ENCODE measurements at regions of chr17 and their contacts with region 1.

Region 1: GRCh38 chr17:48307814-48308411 is 122.1 kb downstream of the SKAP1 start:
- H3K4me3 ChIP-seq: no peak overlapping the region
- H3K27ac ChIP-seq: no peak overlapping the region
- H3K4me1 ChIP-seq: peaks cover 6% of the 10 kb centered on the region
- CTCF ChIP-seq: peak; percentile 47; the same call in 1 of the 2 replicates

Region 2: DNA sequence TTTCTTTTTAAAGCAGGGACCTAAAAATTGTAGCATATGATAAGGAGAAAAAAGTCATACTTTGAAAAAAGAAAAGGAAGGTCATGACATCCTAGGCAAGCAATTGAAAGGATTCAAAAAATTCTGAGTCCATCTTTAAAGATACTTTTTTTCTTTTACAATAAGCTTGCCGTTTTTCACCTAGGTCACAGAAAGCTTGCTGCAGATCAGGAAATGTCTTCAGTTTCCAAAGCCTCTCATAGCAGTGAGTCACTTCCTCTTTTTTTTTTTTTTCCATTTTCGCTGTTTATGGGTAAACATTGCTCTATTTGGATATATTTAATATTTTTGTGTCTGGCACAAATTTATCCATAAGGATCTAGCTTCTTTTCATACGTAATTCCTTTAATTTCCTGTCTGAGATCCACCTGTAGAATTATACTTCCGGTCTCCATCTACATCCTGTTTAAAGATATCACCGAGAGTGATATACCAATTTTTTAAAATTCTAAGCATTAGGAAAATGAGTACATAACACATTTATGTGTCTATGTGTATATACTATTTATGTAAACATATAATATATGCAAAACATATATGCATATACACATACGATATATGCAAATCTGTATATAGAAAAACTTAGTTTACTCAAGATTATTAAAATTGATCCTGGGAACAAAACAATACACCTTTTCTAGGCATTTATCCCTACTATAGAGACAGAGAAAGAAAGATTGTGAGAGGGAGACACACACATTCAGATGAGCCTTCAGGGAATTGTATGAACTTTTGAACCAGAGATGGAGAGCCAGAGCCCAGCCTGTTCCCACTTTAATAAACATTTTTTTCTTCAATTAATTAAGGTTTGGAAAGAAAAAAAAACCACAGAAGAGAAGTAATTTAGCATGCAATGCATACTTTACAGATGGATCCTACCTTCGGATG is 12.3 kb before region 1 on chr17:
- CTCF ChIA-PET with region 1: interaction called, 41 read pairs
- POLR2A ChIA-PET with region 1: no interaction called
- H3K4me3 ChIP-seq: no peak overlapping the region
- H3K27ac ChIP-seq: no peak overlapping the region
- H3K4me1 ChIP-seq: peaks cover 3% of the 10 kb centered on the region; the same call in 1 of the 2 replicates
- CTCF ChIP-seq: no peak

Region 3: DNA sequence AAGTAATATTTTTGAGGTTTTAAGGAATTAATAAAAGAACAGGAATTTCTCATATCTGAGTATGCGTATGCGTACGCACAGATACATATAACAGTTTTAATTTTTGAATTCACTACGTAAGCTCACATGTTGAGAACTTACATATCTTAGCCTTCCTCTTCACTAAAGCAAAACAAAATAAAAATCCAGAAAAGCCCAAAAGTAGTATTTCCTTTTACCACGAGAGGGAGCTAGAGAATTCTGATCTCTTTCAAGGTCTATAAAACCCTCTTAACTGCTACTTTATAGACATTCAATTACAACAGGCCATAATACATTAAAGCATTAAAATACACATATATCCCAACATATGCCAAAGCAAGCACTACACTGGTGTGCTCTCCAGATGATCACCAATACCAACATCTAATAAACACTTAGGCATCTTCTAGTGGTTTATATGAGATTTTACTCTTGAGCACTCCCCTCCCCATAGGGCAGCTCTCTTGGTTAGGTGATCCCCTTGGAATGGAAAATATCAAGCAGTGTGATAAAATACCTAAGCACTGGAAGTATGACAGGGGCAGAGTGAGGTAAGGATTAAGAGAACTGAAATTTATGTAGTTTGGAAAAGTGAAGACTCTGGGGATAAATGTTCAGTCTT is 28.1 kb after region 1 on chr17:
- CTCF ChIA-PET with region 1: interaction called, 60 read pairs
- POLR2A ChIA-PET with region 1: no interaction called
- H3K4me3 ChIP-seq: no peak overlapping the region
- H3K27ac ChIP-seq: no peak overlapping the region
- H3K4me1 ChIP-seq: peaks cover 15% of the 10 kb centered on the region; the same call in 1 of the 2 replicates
- CTCF ChIP-seq: no peak

Region 4: DNA sequence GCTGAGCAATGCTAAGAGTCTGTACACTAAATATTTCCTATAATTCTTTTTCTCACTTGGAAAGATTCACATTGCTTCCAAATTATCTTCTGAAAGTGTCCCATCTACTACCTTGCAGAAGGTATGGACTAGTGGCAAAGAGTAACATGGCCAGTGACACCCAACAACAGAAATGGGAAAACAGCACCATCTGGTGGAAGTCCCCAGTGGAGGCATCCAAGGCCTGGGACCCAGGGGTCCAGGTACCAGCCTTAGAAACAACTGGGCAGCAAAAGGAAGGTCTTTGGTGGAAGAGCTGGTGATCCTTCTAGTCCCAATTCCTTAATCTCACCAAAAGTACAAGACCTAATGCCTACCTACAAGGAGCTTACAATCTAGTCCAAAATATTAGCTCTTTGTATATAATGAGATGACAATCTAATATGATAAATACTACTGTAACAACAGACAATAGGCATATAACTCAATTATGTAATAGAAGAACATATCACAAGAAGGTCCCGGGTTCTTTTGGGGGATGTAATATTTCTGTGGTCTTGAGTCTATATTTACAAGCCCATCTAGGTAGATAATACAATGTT is 66.8 kb after region 1 on chr17:
- CTCF ChIA-PET with region 1: interaction called, 17 read pairs
- POLR2A ChIA-PET with region 1: no interaction called
- H3K4me3 ChIP-seq: no peak overlapping the region
- H3K27ac ChIP-seq: no peak overlapping the region
- H3K4me1 ChIP-seq: no peaks in the 10 kb centered on the region
- CTCF ChIP-seq: no peak

Region 5: GRCh38 chr17:48593840-48594537 is 286.1 kb after region 1 on chr17:
- CTCF ChIA-PET with region 1: interaction called, 44 read pairs
- POLR2A ChIA-PET with region 1: no interaction called
- H3K4me3 ChIP-seq: no peak overlapping the region; the same call in 1 of the 2 replicates
- H3K27ac ChIP-seq: peak overlapping the region; percentile 68
- H3K4me1 ChIP-seq: peaks cover 31% of the 10 kb centered on the region
- CTCF ChIP-seq: peak; percentile 98